PC-9 (cell line): ENCODE measurements at regions of chrX and their contacts with region 1.

Region 1: GRCh38 chrX:48814722-48815121 is 11.6 kb upstream of the ERAS start:
- DNase-seq: no peak
- H3K4me3 ChIP-seq: no peak overlapping the region
- H3K27ac ChIP-seq: no peak overlapping the region
- H3K4me1 ChIP-seq: no peaks in the 10 kb centered on the region
- H3K27me3 ChIP-seq: no peaks in the 10 kb centered on the region
- CTCF ChIP-seq: no peak

Region 2: GRCh38 chrX:48597353-48598264 is 217.1 kb before region 1 on chrX and contains the start of gene WDR13:
- CTCF ChIA-PET with region 1: no interaction called
- POLR2A ChIA-PET with region 1: no interaction called
- intact Hi-C with region 1: no loop called
- DNase-seq: peak; percentile 70 to 86
- H3K4me3 ChIP-seq: peak within 1 kb of the TSS; percentile 64; the same call in 1 of the 2 replicates
- H3K27ac ChIP-seq: peak within 1 kb of the TSS; percentile 89
- H3K4me1 ChIP-seq: no peaks in the 10 kb centered on the region
- H3K27me3 ChIP-seq: no peaks in the 10 kb centered on the region
- CTCF ChIP-seq: no peak
- total RNA-seq, gene WDR13: 28.6 and 43.9 TPM in 2 replicates

Region 3: GRCh38 chrX:48890934-48891401 is 76.2 kb after region 1 on chrX:
- CTCF ChIA-PET with region 1: no interaction called
- POLR2A ChIA-PET with region 1: interaction called, 12 read pairs
- intact Hi-C with region 1: no loop called
- DNase-seq: no peak
- H3K4me3 ChIP-seq: peak overlapping the region; percentile 44; the same call in 1 of the 2 replicates
- H3K27ac ChIP-seq: no peak overlapping the region
- H3K4me1 ChIP-seq: no peaks in the 10 kb centered on the region
- H3K27me3 ChIP-seq: no peaks in the 10 kb centered on the region
- CTCF ChIP-seq: no peak